Naive thymus-derived CD4-positive, alpha-beta T cell (primary cell): ENCODE measurements at regions of chr1 and their contacts with region 1.

Region 1: DNA sequence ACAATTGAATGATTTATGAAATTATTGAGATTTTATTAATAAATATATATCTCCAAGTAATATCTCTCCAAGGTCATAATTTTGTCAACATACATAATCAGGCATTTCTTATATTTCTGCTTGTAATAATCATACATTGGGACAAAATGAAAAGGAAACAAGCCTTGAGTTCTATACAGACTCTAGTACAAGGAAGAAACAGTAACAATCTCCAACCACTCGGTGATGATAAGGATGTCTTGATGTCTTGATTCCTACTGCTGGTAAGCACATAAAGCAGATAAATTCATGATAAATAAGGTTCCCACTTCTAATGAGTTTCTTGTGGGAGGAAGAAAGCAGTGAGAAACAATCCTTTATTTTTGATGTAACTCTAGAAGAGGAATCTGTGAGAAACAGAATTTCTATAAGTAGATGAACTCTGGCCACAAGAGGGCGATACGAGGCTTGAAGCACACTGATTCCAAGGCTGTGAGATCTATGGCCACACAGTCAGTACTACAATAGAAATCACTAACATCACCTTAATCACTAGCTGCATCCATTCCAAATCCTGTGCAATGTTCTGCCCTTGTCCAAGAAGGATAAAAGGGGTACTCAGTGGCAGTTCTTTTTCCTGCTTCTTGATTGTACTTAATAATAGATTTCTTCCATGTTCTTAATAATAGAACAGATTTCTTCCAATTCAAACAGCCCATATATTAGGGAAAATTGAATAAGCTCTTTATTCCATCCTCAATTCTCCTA is 41.4 kb upstream of the LRRC8B start:
- DNase-seq: peak; percentile 37 to 77 (median 67)
- ATAC-seq: peak; percentile 97
- H3K4me3 ChIP-seq: no peak overlapping the region
- H3K4me3 Mint-ChIP-seq: no peak overlapping the region
- H3K27ac ChIP-seq: no peak overlapping the region
- H3K27ac Mint-ChIP-seq: no peak overlapping the region
- H3K4me1 ChIP-seq: no peaks in the 10 kb centered on the region
- H3K4me1 Mint-ChIP-seq: peaks cover 0 to 18% (median 9%) of the 10 kb centered on the region in 7 donors
- H3K27me3 ChIP-seq: no peaks in the 10 kb centered on the region
- H3K27me3 Mint-ChIP-seq: peaks cover 0 to 5% (median 0%) of the 10 kb centered on the region in 5 donors

Region 2: DNA sequence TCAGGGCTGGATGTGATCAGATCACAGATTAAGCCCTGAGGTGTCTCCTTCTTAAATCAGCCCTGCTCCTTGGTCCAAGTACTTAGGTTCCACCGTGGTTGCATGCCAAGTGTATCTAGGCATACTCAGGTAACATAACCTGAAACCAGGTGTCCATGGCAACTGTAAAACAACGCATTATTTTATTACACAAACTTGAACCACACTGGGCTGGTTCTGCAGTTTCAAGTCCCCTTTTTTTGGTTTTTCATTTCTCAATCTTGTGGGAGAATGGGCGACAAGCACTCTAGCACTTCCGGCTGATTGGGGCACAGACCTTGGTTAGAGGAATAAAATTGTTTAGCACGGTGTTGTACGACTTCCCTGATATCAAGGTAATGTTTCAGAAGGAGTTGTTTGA is 54.1 kb before region 1 on chr1:
- CTCF ChIA-PET with region 1: no interaction called
- POLR2A ChIA-PET with region 1: no interaction called
- intact Hi-C with region 1: no loop called
- DNase-seq: no peak
- ATAC-seq: no peak
- H3K4me3 ChIP-seq: no peak overlapping the region
- H3K4me3 Mint-ChIP-seq: no peak overlapping the region
- H3K27ac ChIP-seq: no peak overlapping the region
- H3K27ac Mint-ChIP-seq: no peak overlapping the region
- H3K4me1 ChIP-seq: no peaks in the 10 kb centered on the region
- H3K4me1 Mint-ChIP-seq: no peaks in the 10 kb centered on the region
- H3K27me3 ChIP-seq: no peaks in the 10 kb centered on the region
- H3K27me3 Mint-ChIP-seq: peaks cover 0 to 11% (median 0%) of the 10 kb centered on the region in 5 donors

Region 3: DNA sequence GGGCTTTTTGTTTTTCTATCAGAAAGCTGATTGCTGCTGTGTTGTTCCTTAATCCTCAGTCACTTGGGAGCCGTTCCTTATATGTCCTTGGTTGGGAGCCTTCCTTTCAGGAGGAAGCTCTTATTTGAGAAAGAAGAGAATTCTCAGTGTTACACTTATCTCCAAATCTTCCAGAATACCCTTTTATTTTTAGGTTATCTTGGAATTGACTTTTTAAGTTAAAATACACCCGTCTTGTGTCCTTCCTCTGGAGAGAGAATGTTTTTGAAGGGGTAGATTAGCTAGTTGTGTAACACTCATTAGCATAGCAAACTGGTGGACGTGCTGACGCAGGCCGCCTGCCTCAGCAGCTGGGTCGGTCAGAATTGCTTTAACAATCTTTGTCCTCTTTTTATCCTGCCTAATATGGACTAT is 83.6 kb after region 1 on chr1:
- CTCF ChIA-PET with region 1: no interaction called
- POLR2A ChIA-PET with region 1: no interaction called
- intact Hi-C with region 1: no loop called
- DNase-seq: no peak
- ATAC-seq: peak; percentile 46
- H3K4me3 ChIP-seq: no peak overlapping the region
- H3K4me3 Mint-ChIP-seq: no peak overlapping the region
- H3K27ac ChIP-seq: no peak overlapping the region
- H3K27ac Mint-ChIP-seq: peak overlapping the region in 3 of 9 donors; percentile 11 to 54 (median 53)
- H3K4me1 ChIP-seq: peaks cover 0 to 4% of the 10 kb centered on the region in 2 donors
- H3K4me1 Mint-ChIP-seq: peaks cover 22 to 70% (median 59%) of the 10 kb centered on the region in 7 donors
- H3K27me3 ChIP-seq: no peaks in the 10 kb centered on the region
- H3K27me3 Mint-ChIP-seq: no peaks in the 10 kb centered on the region

Region 4: GRCh38 chr1:89615676-89616598 is 132.8 kb after region 1 on chr1:
- CTCF ChIA-PET with region 1: interaction called, 7 read pairs
- POLR2A ChIA-PET with region 1: interaction called, 11 read pairs
- intact Hi-C with region 1: no loop called
- DNase-seq: no peak
- ATAC-seq: peak; percentile 54
- H3K4me3 ChIP-seq: no peak overlapping the region
- H3K4me3 Mint-ChIP-seq: peak overlapping the region in 2 of 10 donors; percentile 23 to 24
- H3K27ac ChIP-seq: no peak overlapping the region
- H3K27ac Mint-ChIP-seq: peak overlapping the region in 8 of 9 donors; percentile 15 to 86 (median 74)
- H3K4me1 ChIP-seq: peaks cover 30 to 42% of the 10 kb centered on the region in 2 donors
- H3K4me1 Mint-ChIP-seq: peaks cover 38 to 95% (median 84%) of the 10 kb centered on the region in 7 donors
- H3K27me3 ChIP-seq: no peaks in the 10 kb centered on the region
- H3K27me3 Mint-ChIP-seq: no peaks in the 10 kb centered on the region

Region 5: GRCh38 chr1:89804642-89805237 is 321.6 kb after region 1 on chr1:
- CTCF ChIA-PET with region 1: interaction called, 3 read pairs
- POLR2A ChIA-PET with region 1: no interaction called
- intact Hi-C with region 1: loop called in 1 of 2 experiments (anchors 1 kb)
- DNase-seq: peak; percentile 64 to 83 (median 80)
- ATAC-seq: peak; percentile 98
- H3K4me3 ChIP-seq: no peak overlapping the region
- H3K4me3 Mint-ChIP-seq: no peak overlapping the region
- H3K27ac ChIP-seq: no peak overlapping the region
- H3K27ac Mint-ChIP-seq: no peak overlapping the region
- H3K4me1 ChIP-seq: no peaks in the 10 kb centered on the region
- H3K4me1 Mint-ChIP-seq: peaks cover 0 to 6% (median 0%) of the 10 kb centered on the region in 7 donors
- H3K27me3 ChIP-seq: no peaks in the 10 kb centered on the region
- H3K27me3 Mint-ChIP-seq: peaks cover 0 to 7% (median 0%) of the 10 kb centered on the region in 5 donors

Region 6: GRCh38 chr1:89987170-89987819 is 504.1 kb after region 1 on chr1:
- CTCF ChIA-PET with region 1: interaction called, 6 read pairs
- POLR2A ChIA-PET with region 1: no interaction called
- intact Hi-C with region 1: loop called (anchors 1 kb)
- DNase-seq: peak in 8 of 9 donors; percentile 48 to 76 (median 70)
- ATAC-seq: peak; percentile 97
- H3K4me3 ChIP-seq: no peak overlapping the region
- H3K4me3 Mint-ChIP-seq: no peak overlapping the region
- H3K27ac ChIP-seq: no peak overlapping the region
- H3K27ac Mint-ChIP-seq: no peak overlapping the region
- H3K4me1 ChIP-seq: no peaks in the 10 kb centered on the region
- H3K4me1 Mint-ChIP-seq: no peaks in the 10 kb centered on the region
- H3K27me3 ChIP-seq: no peaks in the 10 kb centered on the region
- H3K27me3 Mint-ChIP-seq: peaks cover 0 to 13% (median 4%) of the 10 kb centered on the region in 5 donors